OCI-LY7 (cell line): ENCODE measurements at regions of chr17 and their contacts with region 1.

Region 1: DNA sequence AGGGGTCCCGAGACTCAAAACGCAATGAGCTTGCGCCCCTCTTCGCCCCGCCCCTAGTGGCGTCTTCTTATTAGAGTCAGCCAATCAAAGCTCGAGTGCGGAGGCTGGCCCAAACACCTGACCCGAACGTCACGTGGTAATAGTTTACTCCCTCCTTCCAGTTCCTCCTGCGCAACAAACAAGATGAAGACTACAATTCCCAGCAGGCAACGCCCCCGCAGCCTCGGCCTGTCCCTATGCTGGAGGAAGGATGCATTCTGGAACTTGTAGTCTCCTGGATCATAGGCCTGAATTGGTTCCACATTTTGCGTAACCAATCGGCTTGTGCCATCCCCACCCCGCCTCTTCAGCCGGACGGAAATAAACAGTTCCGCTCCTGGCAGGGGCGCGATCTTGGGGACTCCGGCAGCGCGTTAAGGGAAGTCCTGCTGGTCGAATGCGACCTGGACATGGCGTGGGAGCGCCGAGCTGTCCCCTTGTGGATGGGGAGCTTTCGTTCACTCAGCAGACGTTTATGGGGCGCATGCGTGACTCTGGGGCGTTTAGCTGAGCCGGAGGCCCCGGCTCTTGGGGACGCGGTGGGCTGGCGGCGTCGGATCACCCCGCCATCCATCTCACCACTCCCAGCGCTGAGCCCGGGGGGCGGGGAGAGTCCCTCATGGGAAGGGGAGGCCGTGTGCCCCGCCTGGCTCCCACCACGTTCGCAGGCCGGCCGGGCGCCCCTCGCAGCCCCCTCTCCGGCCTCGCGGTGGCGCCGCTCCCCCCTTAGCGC is at the start of gene WBP2:
- DNase-seq: peak; percentile 100
- H3K4me3 ChIP-seq: peak within 1 kb of the TSS; percentile 78
- H3K27ac ChIP-seq: peak within 1 kb of the TSS; percentile 78
- H3K4me1 ChIP-seq: peaks cover 33% of the 10 kb centered on the region
- CTCF ChIP-seq: peak; percentile 92
- total RNA-seq, gene WBP2: 24.1 and 29.9 TPM in 2 replicates

Region 2: DNA sequence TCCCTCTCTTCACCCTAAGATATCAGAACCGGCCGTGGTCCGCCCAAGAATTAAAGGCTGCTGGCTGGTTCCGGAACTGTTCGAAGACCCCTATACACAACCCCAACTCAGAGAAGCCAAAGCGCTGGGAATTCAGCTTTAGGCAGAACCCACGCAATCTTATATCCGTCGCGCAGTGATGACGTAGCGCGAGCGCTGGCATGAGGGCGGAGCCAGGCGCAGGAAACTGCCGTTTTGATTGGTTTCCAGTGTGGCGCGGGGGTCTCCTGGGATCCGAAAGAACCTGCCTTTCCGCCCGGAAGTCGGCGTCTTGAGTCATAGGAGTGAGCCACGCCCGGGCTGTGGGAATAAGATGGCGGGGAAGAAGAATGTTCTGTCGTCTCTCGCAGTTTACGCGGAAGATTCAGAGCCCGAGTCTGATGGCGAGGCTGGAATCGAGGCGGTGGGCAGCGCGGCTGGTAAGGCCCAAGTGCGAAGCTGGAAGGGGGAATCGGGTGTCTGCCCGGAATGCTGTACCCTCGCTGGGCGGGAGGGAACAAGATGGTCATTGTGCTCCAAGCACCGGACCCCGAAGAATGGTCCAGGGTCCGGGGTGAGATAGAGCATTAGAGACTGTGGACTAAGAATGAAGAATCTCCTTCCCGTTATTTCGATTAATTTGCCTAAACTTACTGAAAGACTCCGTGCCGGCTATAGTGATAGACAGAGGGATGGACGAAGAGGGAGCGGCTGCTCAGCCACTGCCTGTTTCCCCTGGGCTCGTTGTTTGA is 188.3 kb before region 1 on chr17 and contains the starts of genes RECQL5 and SAP30BP:
- CTCF ChIA-PET with region 1: no interaction called
- POLR2A ChIA-PET with region 1: no interaction called
- intact Hi-C with region 1: loop called (anchors 5 kb)
- DNase-seq: peak; percentile 100
- H3K4me3 ChIP-seq: peak within 1 kb of the TSS; percentile 84
- H3K27ac ChIP-seq: peak within 1 kb of the TSS; percentile 94
- H3K4me1 ChIP-seq: peaks cover 54% of the 10 kb centered on the region
- CTCF ChIP-seq: no peak
- total RNA-seq, gene RECQL5: 90.0 and 91.9 TPM in 2 replicates
- total RNA-seq, gene SAP30BP: 122 and 127 TPM in 2 replicates

Region 3: DNA sequence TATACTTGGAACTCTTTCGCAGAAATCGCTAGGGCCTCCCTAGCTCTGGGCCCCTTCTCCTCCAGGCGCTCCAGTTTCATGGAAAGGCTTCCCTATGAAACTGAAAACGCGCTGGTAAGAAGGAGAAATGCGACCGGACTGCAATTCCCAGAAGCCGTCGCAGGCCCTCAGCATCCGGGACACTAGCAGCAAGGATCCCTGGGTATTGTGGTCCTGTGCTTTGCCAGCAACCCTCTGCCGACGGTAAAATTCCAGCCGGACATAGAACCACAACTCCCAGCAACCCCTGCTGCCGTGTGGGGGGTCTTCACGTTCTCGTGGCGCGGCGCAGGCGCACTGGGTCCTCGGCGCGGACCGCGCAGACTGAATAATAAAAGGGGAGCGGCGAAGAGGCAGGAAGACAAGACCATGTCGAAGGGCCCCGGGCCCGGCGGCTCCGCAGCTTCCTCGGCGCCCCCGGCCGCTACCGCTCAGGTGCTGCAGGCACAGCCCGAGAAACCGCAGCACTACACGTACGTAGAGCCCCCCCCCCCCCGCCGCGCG is 71.0 kb before region 1 on chr17 and contains the start of gene UNK:
- CTCF ChIA-PET with region 1: interaction called, 4 read pairs
- POLR2A ChIA-PET with region 1: interaction called, 20 read pairs
- intact Hi-C with region 1: loop called (anchors 1 kb)
- DNase-seq: peak; percentile 100
- H3K4me3 ChIP-seq: peak within 1 kb of the TSS; percentile 76
- H3K27ac ChIP-seq: peak within 1 kb of the TSS; percentile 91
- H3K4me1 ChIP-seq: peaks cover 54% of the 10 kb centered on the region
- CTCF ChIP-seq: no peak
- total RNA-seq, gene UNK: 41.5 and 44.0 TPM in 2 replicates

Region 4: DNA sequence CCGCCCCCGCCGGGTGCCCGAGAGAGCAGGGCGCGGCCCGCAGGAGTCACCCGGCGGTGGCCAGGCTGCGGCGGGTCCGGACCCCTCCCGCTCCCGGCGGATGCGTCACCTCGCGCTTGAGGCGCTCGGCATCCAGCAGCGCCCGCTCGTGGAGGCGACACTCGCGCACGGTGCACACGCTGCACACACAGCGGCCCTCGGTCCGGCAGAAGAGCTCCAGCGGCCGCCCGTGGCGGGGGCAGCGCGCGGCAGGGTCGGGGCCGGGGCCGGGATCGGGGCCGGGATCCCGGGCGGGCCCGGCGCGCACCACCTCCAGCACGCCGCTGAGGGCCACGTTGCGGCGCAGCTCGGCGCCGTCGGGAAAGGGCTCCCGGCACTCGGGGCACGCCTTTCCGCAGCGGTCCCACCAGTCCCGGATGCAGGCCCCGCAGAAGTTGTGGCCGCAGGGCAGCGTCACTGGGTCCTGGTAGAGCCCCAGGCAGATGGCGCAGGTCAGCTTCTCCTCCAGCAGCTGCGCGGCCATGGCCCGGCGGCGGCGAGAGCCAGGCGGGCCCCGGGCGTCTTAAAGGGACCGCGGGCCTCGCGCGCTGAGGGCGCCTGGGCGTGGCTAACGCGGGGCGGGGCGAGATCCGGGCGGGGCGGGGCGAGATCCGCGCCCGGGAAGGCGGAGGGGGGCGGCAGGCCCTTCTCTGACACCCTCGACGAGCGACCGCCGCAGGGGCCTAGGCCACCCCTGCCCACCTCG is 41.1 kb after region 1 on chr17 and contains the start of gene TRIM65:
- CTCF ChIA-PET with region 1: interaction called, 10 read pairs
- POLR2A ChIA-PET with region 1: interaction called, 5 read pairs
- intact Hi-C with region 1: loop called (anchors 1 kb)
- DNase-seq: peak; percentile 90
- H3K4me3 ChIP-seq: peak within 1 kb of the TSS; percentile 80
- H3K27ac ChIP-seq: peak within 1 kb of the TSS; percentile 55
- H3K4me1 ChIP-seq: peaks cover 23% of the 10 kb centered on the region
- CTCF ChIP-seq: peak; percentile 54
- total RNA-seq, gene TRIM65: 45.0 and 54.2 TPM in 2 replicates

Region 5: DNA sequence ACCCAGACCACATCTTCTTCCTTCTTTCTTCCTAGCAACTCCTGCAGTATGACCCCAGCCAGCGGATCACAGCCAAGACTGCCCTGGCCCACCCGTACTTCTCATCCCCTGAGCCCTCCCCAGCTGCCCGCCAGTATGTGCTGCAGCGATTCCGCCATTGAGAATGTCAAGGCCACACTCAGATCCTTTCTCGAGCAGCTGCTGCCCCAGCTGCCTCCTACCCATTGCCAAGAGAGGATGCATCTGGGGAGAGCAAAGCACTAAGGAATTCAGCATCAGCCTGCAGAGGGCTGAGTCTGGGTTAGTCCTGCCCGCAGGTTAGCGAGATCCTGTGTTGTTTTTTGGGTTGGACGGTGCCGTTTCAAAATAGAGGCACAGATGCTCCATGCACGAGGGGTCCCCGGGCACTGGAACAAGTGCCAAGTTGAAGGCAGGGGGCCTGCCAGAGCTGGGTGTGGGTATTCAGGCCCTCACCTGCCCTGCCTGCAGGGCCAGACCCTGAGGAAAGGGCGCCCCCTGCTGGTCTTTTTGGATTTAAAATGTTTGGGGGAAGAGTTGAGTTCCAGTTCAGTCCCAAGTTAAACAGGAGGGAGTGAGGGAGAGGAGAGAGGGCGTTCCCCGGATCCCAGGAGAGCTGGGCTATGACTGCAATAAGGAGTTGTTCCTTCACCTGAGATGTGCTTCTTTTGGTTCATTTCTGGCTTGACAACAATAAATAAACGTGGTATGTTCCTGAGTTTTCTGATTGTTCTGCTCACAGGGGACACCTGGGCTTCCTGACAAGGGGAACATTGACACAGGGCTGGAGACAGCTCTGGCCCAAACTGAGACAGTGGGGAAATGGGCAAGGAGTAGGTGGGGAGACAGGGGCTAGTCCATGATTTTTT is 150.0 kb after region 1 on chr17:
- CTCF ChIA-PET with region 1: interaction called, 3 read pairs
- POLR2A ChIA-PET with region 1: interaction called, 3 read pairs
- intact Hi-C with region 1: loop called (anchors 5 kb)
- DNase-seq: peak; percentile 89
- H3K4me3 ChIP-seq: no peak overlapping the region
- H3K27ac ChIP-seq: no peak overlapping the region
- H3K4me1 ChIP-seq: peaks cover 3% of the 10 kb centered on the region
- CTCF ChIP-seq: peak; percentile 99

Region 6: GRCh38 chr17:76072148-76072858 is 216.8 kb after region 1 on chr17 and contains the start of gene SRP68:
- CTCF ChIA-PET with region 1: no interaction called
- POLR2A ChIA-PET with region 1: no interaction called
- intact Hi-C with region 1: loop called (anchors 5 kb)
- DNase-seq: peak; percentile 90
- H3K4me3 ChIP-seq: peak within 1 kb of the TSS; percentile 78
- H3K27ac ChIP-seq: peak within 1 kb of the TSS; percentile 72
- H3K4me1 ChIP-seq: peaks cover 20% of the 10 kb centered on the region
- CTCF ChIP-seq: no peak
- total RNA-seq, gene SRP68: 53.5 and 54.0 TPM in 2 replicates